ENCODE measurements at regions of chr4 and their contacts with region 1.

Region 1: GRCh38 chr4:25862411-25863346 is at the start of gene SEL1L3:
- DNase-seq: peak; percentile 68
- ATAC-seq: peak; percentile 39
- H3K4me3 Mint-ChIP-seq: peak within 1 kb of the TSS; percentile 98
- H3K27ac Mint-ChIP-seq: peak within 1 kb of the TSS; percentile 99
- H3K4me1 Mint-ChIP-seq: peaks cover 84% of the 10 kb centered on the region
- H3K27me3 Mint-ChIP-seq: no peaks in the 10 kb centered on the region
- CTCF ChIP-seq: no peak
- total RNA-seq, gene SEL1L3: 102 and 113 TPM in 2 replicates

Region 2: DNA sequence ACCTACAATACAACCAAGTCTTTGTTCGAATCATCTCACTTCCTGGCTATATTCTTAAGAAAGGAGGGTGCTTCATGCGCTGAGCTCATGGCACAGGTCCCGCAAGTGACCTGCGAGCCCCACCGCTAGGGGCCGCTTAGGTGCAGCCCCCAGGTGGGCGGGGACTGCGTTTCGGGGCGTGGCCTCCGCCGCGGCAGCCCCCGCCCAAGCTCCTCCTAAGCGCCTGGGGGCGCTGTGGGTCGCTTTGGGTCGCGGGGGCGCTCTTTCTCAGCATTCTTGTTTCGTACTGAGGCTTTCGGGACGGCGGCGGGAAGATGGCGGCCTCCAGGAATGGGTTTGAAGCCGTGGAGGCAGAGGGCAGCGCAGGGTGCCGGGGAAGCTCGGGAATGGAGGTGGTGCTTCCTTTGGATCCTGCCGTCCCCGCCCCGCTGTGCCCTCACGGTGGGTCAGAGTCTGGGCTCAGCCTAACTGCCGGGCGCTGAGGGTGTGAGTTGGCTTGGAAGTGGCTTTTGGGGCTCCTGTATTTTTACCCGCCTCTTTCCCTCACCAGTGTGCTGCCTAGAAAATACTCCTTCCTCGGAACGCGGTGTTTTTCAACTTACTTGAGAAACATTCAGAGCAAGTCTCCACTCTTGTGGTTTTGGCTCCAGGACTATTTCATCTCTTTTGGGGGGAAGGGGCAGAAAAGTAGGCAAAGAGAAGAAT is 550.0 kb before region 1 on chr4 and contains the start of gene ZCCHC4:
- CTCF ChIA-PET with region 1: no interaction called
- POLR2A ChIA-PET with region 1: no interaction called
- intact Hi-C with region 1: loop called (anchors 5 kb)
- DNase-seq: peak; percentile 95
- ATAC-seq: peak; percentile 99
- H3K4me3 Mint-ChIP-seq: peak within 1 kb of the TSS; percentile 98
- H3K27ac Mint-ChIP-seq: peak within 1 kb of the TSS; percentile 95
- H3K4me1 Mint-ChIP-seq: peaks cover 45% of the 10 kb centered on the region
- H3K27me3 Mint-ChIP-seq: no peaks in the 10 kb centered on the region
- CTCF ChIP-seq: peak; percentile 90
- total RNA-seq, gene ZCCHC4: 14.7 and 19.1 TPM in 2 replicates

Region 3: DNA sequence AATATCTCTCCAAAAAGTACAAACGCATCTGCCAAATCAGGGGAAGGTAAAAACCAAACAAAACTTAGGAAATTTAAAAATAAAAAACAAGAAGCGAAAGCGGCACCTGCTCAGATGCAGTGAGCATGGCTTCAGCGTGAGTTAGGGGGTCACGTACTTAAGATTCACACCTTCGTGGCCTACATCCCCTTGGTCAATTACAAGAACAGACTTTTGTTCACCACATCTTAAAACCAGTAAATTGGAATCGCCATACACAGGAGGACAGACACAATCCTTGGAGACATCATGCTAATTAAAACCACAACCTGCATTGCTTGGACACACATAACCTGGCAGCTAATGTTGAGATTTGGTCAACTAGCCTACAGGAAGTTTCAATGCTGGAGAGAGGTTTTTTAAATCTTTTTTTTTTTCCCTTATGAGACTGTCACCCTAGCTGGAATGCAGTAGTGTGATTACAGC is 12.6 kb after region 1 on chr4:
- CTCF ChIA-PET with region 1: interaction called, 3 read pairs
- POLR2A ChIA-PET with region 1: interaction called, 29 read pairs
- intact Hi-C with region 1: loop called (anchors 1 kb)
- DNase-seq: no peak
- ATAC-seq: peak; percentile 38
- H3K4me3 Mint-ChIP-seq: peak overlapping the region; percentile 29
- H3K27ac Mint-ChIP-seq: peak overlapping the region; percentile 84
- H3K4me1 Mint-ChIP-seq: peaks cover 94% of the 10 kb centered on the region
- H3K27me3 Mint-ChIP-seq: no peaks in the 10 kb centered on the region
- CTCF ChIP-seq: no peak

Region 4: GRCh38 chr4:25884031-25884782 is 21.5 kb after region 1 on chr4:
- CTCF ChIA-PET with region 1: interaction called, 3 read pairs
- POLR2A ChIA-PET with region 1: interaction called, 29 read pairs
- intact Hi-C with region 1: no loop called
- DNase-seq: no peak
- ATAC-seq: peak; percentile 57
- H3K4me3 Mint-ChIP-seq: no peak overlapping the region
- H3K27ac Mint-ChIP-seq: peak overlapping the region; percentile 62
- H3K4me1 Mint-ChIP-seq: peaks cover 50% of the 10 kb centered on the region
- H3K27me3 Mint-ChIP-seq: no peaks in the 10 kb centered on the region
- CTCF ChIP-seq: no peak

Region 5: DNA sequence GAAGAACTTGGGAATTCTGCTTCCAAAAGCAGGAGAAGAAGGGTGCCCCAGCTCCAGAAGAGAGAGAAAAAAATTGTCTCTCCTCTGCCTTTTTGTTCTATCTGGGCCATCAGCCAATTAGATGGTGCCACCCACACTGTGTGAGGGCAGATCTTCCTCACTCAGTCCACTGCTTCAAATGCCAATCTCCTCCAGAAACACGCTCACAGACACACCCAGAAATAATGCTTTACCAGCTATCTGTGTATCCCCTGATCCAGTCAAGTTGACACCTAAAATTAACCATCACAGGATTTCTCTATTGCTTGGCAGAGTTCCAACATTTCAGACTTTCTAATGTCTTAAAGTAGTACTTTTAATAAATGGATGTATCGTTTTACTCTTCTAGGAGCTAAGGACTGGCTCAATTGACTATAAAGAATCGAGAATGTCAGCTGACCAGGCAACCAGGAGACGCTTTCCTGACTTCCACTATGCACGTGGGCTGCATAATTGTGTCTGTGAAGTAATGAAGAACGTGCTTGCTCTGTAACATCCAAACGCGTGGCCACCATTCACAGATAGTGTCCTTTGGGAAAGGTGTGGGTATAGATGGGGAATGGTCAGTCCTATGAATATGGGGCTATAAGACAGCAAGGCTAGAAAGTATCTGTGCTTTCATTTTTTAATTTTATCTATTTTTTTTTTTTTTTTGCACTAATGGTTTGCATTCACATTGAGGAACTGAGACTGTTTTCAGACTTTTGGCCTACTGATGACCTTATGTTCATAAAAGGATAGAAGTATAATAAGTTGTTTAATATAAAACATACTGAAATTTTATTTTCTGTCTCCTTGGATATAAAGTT is 41.4 kb after region 1 on chr4:
- CTCF ChIA-PET with region 1: no interaction called
- POLR2A ChIA-PET with region 1: interaction called, 18 read pairs
- intact Hi-C with region 1: loop called (anchors 1 kb)
- DNase-seq: no peak
- ATAC-seq: peak; percentile 68
- H3K4me3 Mint-ChIP-seq: peak overlapping the region; percentile 63
- H3K27ac Mint-ChIP-seq: peak overlapping the region; percentile 75
- H3K4me1 Mint-ChIP-seq: peaks cover 56% of the 10 kb centered on the region
- H3K27me3 Mint-ChIP-seq: no peaks in the 10 kb centered on the region
- CTCF ChIP-seq: no peak

Region 6: DNA sequence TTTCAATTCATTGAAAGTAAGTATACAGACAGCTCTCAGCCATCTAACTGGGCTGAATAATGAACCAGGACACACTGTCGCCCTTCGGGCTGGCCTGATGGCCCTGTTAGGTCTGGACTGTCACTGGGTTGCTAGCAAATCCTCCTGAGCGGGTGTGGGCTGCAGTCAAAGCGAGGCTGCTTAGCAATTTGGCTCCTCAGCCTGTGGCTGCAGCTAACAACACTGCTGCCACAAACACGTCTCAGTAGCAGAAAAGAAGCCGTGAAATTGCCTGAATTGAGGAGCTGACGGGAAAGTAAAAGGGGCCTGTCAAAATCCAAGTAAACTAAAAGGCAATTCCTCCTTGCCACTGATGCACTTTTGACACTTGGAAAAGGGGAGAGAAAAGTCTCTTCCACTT is 124.1 kb after region 1 on chr4:
- CTCF ChIA-PET with region 1: interaction called, 6 read pairs
- POLR2A ChIA-PET with region 1: no interaction called
- intact Hi-C with region 1: loop called (anchors 5 kb)
- DNase-seq: no peak
- ATAC-seq: no peak
- H3K4me3 Mint-ChIP-seq: no peak overlapping the region
- H3K27ac Mint-ChIP-seq: no peak overlapping the region
- H3K4me1 Mint-ChIP-seq: peaks cover 16% of the 10 kb centered on the region
- H3K27me3 Mint-ChIP-seq: peaks cover 3% of the 10 kb centered on the region
- CTCF ChIP-seq: no peak

Region 7: GRCh38 chr4:26992657-26993361 is 1130.1 kb after region 1 on chr4:
- CTCF ChIA-PET with region 1: no interaction called
- POLR2A ChIA-PET with region 1: no interaction called
- intact Hi-C with region 1: loop called (anchors 2 kb)
- DNase-seq: peak; percentile 26
- ATAC-seq: peak; percentile 80
- H3K4me3 Mint-ChIP-seq: no peak overlapping the region
- H3K27ac Mint-ChIP-seq: no peak overlapping the region
- H3K4me1 Mint-ChIP-seq: peaks cover 17% of the 10 kb centered on the region
- H3K27me3 Mint-ChIP-seq: no peaks in the 10 kb centered on the region
- CTCF ChIP-seq: no peak